CD8-positive, alpha-beta T cell (primary cell): ENCODE measurements at regions of chr1 and their contacts with region 1.

Region 1: GRCh38 chr1:145845514-145846161 is at the start of gene NUDT17:
- DNase-seq: peak; percentile 55 to 88 (median 82)
- ATAC-seq: peak; percentile 79
- H3K4me3 ChIP-seq: peak within 1 kb of the TSS; percentile 58 to 74
- H3K4me3 Mint-ChIP-seq: no peak within 1 kb of the TSS
- H3K27ac ChIP-seq: peak within 1 kb of the TSS; percentile 14 to 21
- H3K27ac Mint-ChIP-seq: peak within 1 kb of the TSS; percentile 47
- H3K4me1 ChIP-seq: peaks cover 12% of the 10 kb centered on the region
- H3K4me1 Mint-ChIP-seq: peaks cover 8% of the 10 kb centered on the region
- H3K27me3 ChIP-seq: no peaks in the 10 kb centered on the region
- H3K27me3 Mint-ChIP-seq: no peaks in the 10 kb centered on the region
- CTCF ChIP-seq: peak; percentile 91
- total RNA-seq, gene NUDT17: 1.4 TPM

Region 2: DNA sequence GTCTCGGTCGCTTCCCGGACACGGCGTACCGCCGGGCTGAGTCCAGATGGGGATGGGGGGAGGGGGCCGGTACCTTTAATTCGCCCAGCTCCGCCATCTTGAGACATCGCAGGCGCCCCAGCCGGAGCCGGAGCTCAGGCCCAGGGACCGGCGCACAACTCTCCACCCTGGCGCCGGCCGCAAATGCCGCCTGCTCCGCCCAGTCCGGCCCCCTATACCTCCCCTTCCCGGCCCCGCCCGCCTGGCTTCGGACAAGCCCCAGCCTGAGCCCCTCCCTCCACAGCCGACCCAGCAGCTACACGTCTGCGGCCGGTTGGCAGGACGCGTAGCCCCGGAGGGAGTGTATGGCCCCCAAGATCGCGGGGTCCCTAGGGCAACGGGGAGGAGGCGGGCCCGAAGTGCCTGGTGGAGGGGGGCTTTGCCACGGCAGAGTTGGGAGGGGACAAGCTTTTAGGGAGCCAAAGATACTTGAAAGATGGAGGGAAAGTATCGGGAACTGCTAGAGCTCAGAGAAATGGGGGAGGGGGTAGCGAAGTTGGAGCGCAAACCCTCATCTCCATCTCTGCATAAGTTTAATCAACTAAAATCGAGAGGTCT is 13.4 kb after region 1 on chr1 and contains the start of gene PIAS3:
- CTCF ChIA-PET with region 1: interaction called, 120 read pairs
- POLR2A ChIA-PET with region 1: interaction called, 66 read pairs
- intact Hi-C with region 1: loop called in 1 of 2 experiments (anchors 1 kb)
- DNase-seq: peak; percentile 60 to 90 (median 78)
- ATAC-seq: peak; percentile 83
- H3K4me3 ChIP-seq: peak within 1 kb of the TSS; percentile 99 to 100
- H3K4me3 Mint-ChIP-seq: peak within 1 kb of the TSS; percentile 97
- H3K27ac ChIP-seq: peak within 1 kb of the TSS; percentile 64 to 65
- H3K27ac Mint-ChIP-seq: peak within 1 kb of the TSS; percentile 87
- H3K4me1 ChIP-seq: peaks cover 10% of the 10 kb centered on the region
- H3K4me1 Mint-ChIP-seq: peaks cover 17% of the 10 kb centered on the region
- H3K27me3 ChIP-seq: no peaks in the 10 kb centered on the region
- H3K27me3 Mint-ChIP-seq: no peaks in the 10 kb centered on the region
- CTCF ChIP-seq: no peak
- total RNA-seq, gene PIAS3: 16.3 to 16.6 TPM

Region 3: DNA sequence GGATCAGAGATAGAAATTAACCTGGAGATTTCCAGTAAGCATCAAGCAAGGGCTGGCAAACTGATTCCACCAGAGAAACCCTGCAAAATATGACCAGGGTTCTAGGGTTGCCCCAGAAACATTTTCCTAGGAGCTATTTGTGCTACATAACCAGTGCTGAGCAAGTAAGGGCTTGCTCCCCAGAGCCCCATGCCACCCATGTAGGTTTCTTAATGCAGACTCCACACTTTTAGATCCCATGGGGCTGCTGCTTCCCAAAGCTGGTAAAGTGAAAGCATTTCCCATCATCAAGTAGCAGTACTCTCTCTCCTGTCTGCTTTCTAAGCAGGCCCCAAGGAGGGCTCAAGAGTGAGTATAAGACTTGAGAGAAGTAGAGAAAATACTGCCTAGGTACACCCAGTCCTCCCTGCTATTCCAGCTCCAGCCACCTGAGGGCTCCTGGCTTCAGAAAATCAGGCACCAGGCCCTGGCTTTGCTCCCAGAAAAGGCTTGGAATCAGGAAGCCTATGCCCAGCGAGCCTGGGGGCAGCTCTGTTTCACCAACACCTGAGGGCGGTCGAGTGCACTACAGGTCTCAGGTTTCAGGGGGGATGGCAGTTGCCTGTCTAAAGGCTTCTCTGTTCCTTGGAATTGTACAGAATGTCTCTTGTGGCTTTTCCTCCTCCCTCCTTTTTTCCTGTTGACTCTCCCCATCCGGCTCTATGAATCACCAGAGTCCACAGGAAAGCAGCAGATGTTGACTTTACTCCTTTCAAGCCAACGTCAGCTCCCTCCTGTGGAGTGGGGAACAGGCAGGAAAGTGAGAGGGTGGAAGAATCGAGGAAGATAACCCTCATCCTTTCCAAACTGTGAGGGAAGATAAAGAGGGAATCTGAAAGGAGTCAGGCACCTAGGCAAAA is 46.2 kb after region 1 on chr1:
- CTCF ChIA-PET with region 1: interaction called, 75 read pairs
- POLR2A ChIA-PET with region 1: no interaction called
- intact Hi-C with region 1: loop called in 1 of 2 experiments (anchors 5 kb)
- DNase-seq: peak in 8 of 9 experiments; percentile 16 to 65 (median 54)
- ATAC-seq: peak; percentile 85
- H3K4me3 ChIP-seq: no peak overlapping the region
- H3K4me3 Mint-ChIP-seq: no peak overlapping the region
- H3K27ac ChIP-seq: no peak overlapping the region
- H3K27ac Mint-ChIP-seq: no peak overlapping the region
- H3K4me1 ChIP-seq: no peaks in the 10 kb centered on the region
- H3K4me1 Mint-ChIP-seq: peaks cover under 1% of the 10 kb centered on the region
- H3K27me3 ChIP-seq: no peaks in the 10 kb centered on the region
- H3K27me3 Mint-ChIP-seq: no peaks in the 10 kb centered on the region
- CTCF ChIP-seq: peak; percentile 69

Region 4: DNA sequence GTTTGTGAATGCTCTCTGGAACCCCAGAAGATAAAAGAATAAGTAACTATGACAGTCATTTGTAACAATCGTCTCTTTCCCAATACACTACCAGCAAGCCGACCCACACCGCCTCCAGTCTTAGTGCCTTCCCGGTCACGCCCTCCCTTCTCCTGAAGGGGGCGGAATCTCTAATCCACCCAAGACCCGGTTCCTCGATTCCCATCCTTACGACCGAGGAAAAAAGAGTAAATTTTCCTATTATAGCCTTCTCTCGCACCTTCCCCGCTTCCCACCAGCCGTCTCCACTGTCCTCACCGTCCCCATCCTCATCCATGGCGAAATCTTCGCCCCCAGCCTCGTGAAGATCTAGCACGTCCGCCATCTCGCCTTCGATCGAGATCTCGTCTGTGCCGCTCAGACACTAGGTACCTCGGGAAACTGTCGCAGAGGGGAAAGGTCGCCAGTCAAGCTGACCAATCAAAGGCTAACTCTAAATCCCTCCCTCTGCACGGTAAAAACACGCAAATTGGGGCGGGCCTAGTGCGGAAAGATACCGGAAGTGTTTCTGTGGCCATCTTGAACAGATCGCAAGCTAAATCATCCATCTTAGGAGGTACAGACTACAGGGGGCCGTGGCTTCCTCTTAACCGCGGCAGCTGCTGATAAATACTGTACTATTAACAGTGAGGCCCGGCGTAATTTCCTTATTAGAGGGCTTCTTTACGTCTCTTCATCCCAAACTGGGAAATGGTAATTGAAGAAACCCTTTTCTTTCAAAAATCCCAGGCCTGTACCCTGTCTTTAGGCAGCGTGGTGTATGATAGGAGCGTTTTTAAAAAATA is 81.6 kb after region 1 on chr1 and contains the start of gene RBM8A:
- CTCF ChIA-PET with region 1: interaction called, 10 read pairs
- POLR2A ChIA-PET with region 1: interaction called, 6 read pairs
- intact Hi-C with region 1: no loop called
- DNase-seq: peak; percentile 85 to 99 (median 94)
- ATAC-seq: peak; percentile 96
- H3K4me3 ChIP-seq: peak within 1 kb of the TSS; percentile 86 to 91
- H3K4me3 Mint-ChIP-seq: no peak within 1 kb of the TSS
- H3K27ac ChIP-seq: peak within 1 kb of the TSS; percentile 89 to 95
- H3K27ac Mint-ChIP-seq: peak within 1 kb of the TSS; percentile 91
- H3K4me1 ChIP-seq: peaks cover 22% of the 10 kb centered on the region
- H3K4me1 Mint-ChIP-seq: peaks cover 20% of the 10 kb centered on the region
- H3K27me3 ChIP-seq: no peaks in the 10 kb centered on the region
- H3K27me3 Mint-ChIP-seq: no peaks in the 10 kb centered on the region
- CTCF ChIP-seq: peak; percentile 60
- total RNA-seq, gene RBM8A: 180 to 187 TPM

Region 5: DNA sequence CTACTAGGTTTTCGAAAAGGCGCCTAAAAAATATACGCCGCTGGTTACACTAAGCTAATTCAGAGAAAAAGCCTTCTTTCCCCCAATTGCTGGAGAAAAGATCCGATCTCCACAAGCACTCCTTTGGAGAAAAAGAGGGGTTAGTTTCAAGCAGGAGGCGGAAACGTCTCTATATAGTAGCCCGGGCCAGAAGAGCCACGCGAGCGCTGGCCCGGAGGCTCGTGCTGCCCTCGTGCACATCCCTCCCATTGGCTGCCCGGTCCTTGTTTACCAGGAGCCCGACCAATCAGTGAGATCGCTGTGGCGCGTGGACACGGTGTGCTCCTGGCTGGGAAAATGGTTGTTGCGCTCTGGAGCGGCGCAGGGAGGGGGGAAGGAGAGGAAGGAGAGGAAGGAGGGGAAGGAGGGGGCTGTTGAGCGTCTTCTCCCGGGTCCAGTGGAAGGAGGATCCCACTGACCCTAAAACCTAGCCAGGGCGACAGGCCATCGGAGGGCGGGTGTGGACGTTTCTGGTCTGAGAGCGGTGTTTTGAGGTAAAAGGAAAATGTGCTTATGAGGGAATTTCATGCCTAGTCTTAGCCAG is 150.9 kb after region 1 on chr1 and contains the start of gene TXNIP:
- CTCF ChIA-PET with region 1: interaction called, 6 read pairs
- POLR2A ChIA-PET with region 1: no interaction called
- intact Hi-C with region 1: loop called in 1 of 2 experiments (anchors 5 kb)
- DNase-seq: peak; percentile 63 to 97 (median 93)
- ATAC-seq: peak; percentile 73
- H3K4me3 ChIP-seq: peak within 1 kb of the TSS; percentile 71 to 94
- H3K4me3 Mint-ChIP-seq: peak within 1 kb of the TSS; percentile 96
- H3K27ac ChIP-seq: peak within 1 kb of the TSS; percentile 93 to 98
- H3K27ac Mint-ChIP-seq: peak within 1 kb of the TSS; percentile 98
- H3K4me1 ChIP-seq: peaks cover 40% of the 10 kb centered on the region
- H3K4me1 Mint-ChIP-seq: peaks cover 58% of the 10 kb centered on the region
- H3K27me3 ChIP-seq: no peaks in the 10 kb centered on the region
- H3K27me3 Mint-ChIP-seq: no peaks in the 10 kb centered on the region
- CTCF ChIP-seq: no peak
- total RNA-seq, gene TXNIP: 627 to 652 TPM

Region 6: GRCh38 chr1:146036965-146037646 is 191.5 kb after region 1 on chr1:
- CTCF ChIA-PET with region 1: interaction called, 12 read pairs
- POLR2A ChIA-PET with region 1: interaction called, 7 read pairs
- intact Hi-C with region 1: no loop called
- DNase-seq: peak; percentile 51 to 87 (median 70)
- ATAC-seq: peak; percentile 54
- H3K4me3 ChIP-seq: peak overlapping the region; percentile 72 to 94
- H3K4me3 Mint-ChIP-seq: peak overlapping the region; percentile 97
- H3K27ac ChIP-seq: peak overlapping the region; percentile 60 to 63
- H3K27ac Mint-ChIP-seq: peak overlapping the region; percentile 95
- H3K4me1 ChIP-seq: peaks cover 14% of the 10 kb centered on the region
- H3K4me1 Mint-ChIP-seq: peaks cover 29% of the 10 kb centered on the region
- H3K27me3 ChIP-seq: no peaks in the 10 kb centered on the region
- H3K27me3 Mint-ChIP-seq: no peaks in the 10 kb centered on the region
- CTCF ChIP-seq: no peak